B cell (primary cell): ENCODE measurements at regions of chr9 and their contacts with region 1.

Region 1: GRCh38 chr9:98192503-98193335 is at the start of gene CORO2A:
- DNase-seq: peak; percentile 73
- ATAC-seq: peak; percentile 91
- H3K4me3 ChIP-seq: peak within 1 kb of the TSS; percentile 34 to 77 (median 67)
- H3K4me3 Mint-ChIP-seq: peak within 1 kb of the TSS; percentile 91
- H3K27ac ChIP-seq: no peak within 1 kb of the TSS
- H3K27ac Mint-ChIP-seq: peak within 1 kb of the TSS; percentile 71
- H3K4me1 ChIP-seq: peaks cover 8 to 18% of the 10 kb centered on the region in 2 donors
- H3K4me1 Mint-ChIP-seq: peaks cover 10% of the 10 kb centered on the region
- H3K27me3 ChIP-seq: peaks cover 0 to 12% (median 2%) of the 10 kb centered on the region in 4 experiments
- H3K27me3 Mint-ChIP-seq: no peaks in the 10 kb centered on the region
- CTCF ChIP-seq: peak; percentile 23
- total RNA-seq, gene CORO2A: 2.0 TPM in 2 replicates

Region 2: GRCh38 chr9:98056269-98057137 is 136.2 kb before region 1 on chr9 and contains the start of gene NANS:
- CTCF ChIA-PET with region 1: no interaction called
- POLR2A ChIA-PET with region 1: no interaction called
- intact Hi-C with region 1: no loop called
- DNase-seq: peak; percentile 92
- ATAC-seq: peak; percentile 97
- H3K4me3 ChIP-seq: peak within 1 kb of the TSS; percentile 76 to 85 (median 81)
- H3K4me3 Mint-ChIP-seq: peak within 1 kb of the TSS; percentile 99
- H3K27ac ChIP-seq: peak within 1 kb of the TSS; percentile 80 to 89
- H3K27ac Mint-ChIP-seq: peak within 1 kb of the TSS; percentile 95
- H3K4me1 ChIP-seq: peaks cover 8 to 18% of the 10 kb centered on the region in 2 donors
- H3K4me1 Mint-ChIP-seq: peaks cover 17% of the 10 kb centered on the region
- H3K27me3 ChIP-seq: no peaks in the 10 kb centered on the region
- H3K27me3 Mint-ChIP-seq: no peaks in the 10 kb centered on the region
- CTCF ChIP-seq: no peak
- total RNA-seq, gene NANS: 14.9 and 15.3 TPM in 2 replicates

Region 3: GRCh38 chr9:98101868-98102273 is 90.8 kb before region 1 on chr9:
- CTCF ChIA-PET with region 1: interaction called, 4 read pairs
- POLR2A ChIA-PET with region 1: no interaction called
- intact Hi-C with region 1: loop called (anchors 5 kb)
- DNase-seq: peak; percentile 91
- ATAC-seq: peak; percentile 98
- H3K4me3 ChIP-seq: peak overlapping the region in 1 of 5 experiments; percentile 38
- H3K4me3 Mint-ChIP-seq: peak overlapping the region; percentile 68
- H3K27ac ChIP-seq: peak overlapping the region; percentile 66 to 74
- H3K27ac Mint-ChIP-seq: peak overlapping the region; percentile 81
- H3K4me1 ChIP-seq: peaks cover 82 to 87% of the 10 kb centered on the region in 2 donors
- H3K4me1 Mint-ChIP-seq: peaks cover 77% of the 10 kb centered on the region
- H3K27me3 ChIP-seq: no peaks in the 10 kb centered on the region
- H3K27me3 Mint-ChIP-seq: no peaks in the 10 kb centered on the region
- CTCF ChIP-seq: no peak